GM12878 (cell line): ENCODE measurements at regions of chrX and their contacts with region 1.

Region 1: DNA sequence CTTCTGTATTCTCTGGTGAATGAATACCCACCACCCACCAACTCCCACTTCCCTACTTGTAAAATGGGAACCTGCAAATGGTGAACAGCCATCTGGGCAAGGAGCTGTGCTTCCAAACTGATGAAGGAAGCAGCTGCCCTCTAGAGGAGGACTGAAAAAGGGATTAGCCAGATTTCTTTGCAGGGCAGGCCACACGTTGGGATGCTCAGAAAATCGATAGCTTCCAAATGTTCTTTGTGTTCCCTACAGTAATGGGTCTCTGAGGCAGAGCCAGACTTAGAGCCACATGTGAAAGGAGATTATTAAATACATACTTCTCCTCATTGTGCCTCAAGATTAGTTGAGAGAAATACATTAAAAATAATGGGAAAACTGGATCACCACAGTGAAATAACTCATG is 39.3 kb upstream of the LPAR4 start:
- DNase-seq: no peak
- ATAC-seq: peak; percentile 46; the same call in 2 of the 3 replicates
- H3K4me3 ChIP-seq: no peak overlapping the region
- H3K27ac ChIP-seq: no peak overlapping the region
- H3K4me1 ChIP-seq: no peaks in the 10 kb centered on the region
- H3K27me3 ChIP-seq: no peaks in the 10 kb centered on the region
- CTCF ChIP-seq: peak; percentile 26 to 43 (median 36); a peak in 5 of 6 replicates
- EP300 ChIP-seq: no peak
- POLR2A ChIP-seq: no peak
- RAD21 ChIP-seq: peak; percentile 61

Region 2: GRCh38 chrX:78283511-78283910 is 424.8 kb before region 1 on chrX:
- CTCF ChIA-PET with region 1: no interaction called
- POLR2A ChIA-PET with region 1: no interaction called
- RAD21 ChIA-PET with region 1: no interaction called
- SMC1A ChIA-PET with region 1: no interaction called
- in situ Hi-C with region 1: no loop called
- intact Hi-C with region 1: no loop called
- DNase-seq: no peak
- ATAC-seq: no peak
- H3K4me3 ChIP-seq: no peak overlapping the region
- H3K27ac ChIP-seq: no peak overlapping the region
- H3K4me1 ChIP-seq: no peaks in the 10 kb centered on the region
- H3K27me3 ChIP-seq: no peaks in the 10 kb centered on the region
- CTCF ChIP-seq: no peak
- EP300 ChIP-seq: no peak
- POLR2A ChIP-seq: no peak
- RAD21 ChIP-seq: no peak

Region 3: GRCh38 chrX:78543281-78543680 is 165.0 kb before region 1 on chrX:
- CTCF ChIA-PET with region 1: no interaction called
- POLR2A ChIA-PET with region 1: no interaction called
- RAD21 ChIA-PET with region 1: no interaction called
- SMC1A ChIA-PET with region 1: no interaction called
- in situ Hi-C with region 1: no loop called
- intact Hi-C with region 1: no loop called
- DNase-seq: no peak
- ATAC-seq: no peak
- H3K4me3 ChIP-seq: no peak overlapping the region
- H3K27ac ChIP-seq: no peak overlapping the region
- H3K4me1 ChIP-seq: no peaks in the 10 kb centered on the region
- H3K27me3 ChIP-seq: no peaks in the 10 kb centered on the region
- CTCF ChIP-seq: no peak
- EP300 ChIP-seq: no peak
- POLR2A ChIP-seq: no peak
- RAD21 ChIP-seq: no peak

Region 4: DNA sequence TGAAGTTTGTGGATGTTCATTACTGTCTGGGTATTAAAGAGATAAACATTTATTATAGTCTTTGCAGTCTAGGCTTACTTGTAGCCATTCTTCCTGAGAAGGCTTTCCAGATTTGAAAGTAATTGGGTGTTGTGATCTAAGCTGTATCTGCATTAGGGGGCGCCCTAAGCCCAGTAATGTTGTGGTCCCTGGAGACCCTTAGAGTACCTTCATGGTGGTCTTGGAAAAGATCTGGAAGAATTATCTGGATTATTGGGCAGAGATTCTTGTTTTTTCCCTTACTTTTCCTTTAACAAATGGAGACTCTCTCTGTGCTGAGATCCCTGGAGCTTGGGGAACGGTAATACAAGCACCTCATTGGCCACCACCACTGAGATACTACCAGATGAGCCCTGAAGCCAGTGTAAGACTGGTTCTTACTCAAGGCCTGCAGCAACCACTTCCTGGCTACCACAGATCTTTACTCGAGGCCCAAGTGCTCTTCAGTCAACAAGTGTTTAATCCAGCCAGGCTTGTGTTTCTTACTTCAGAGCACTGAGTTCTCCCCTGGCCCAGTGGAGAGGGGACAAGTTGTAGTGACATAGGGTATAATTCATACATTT is 112.3 kb before region 1 on chrX:
- CTCF ChIA-PET with region 1: interaction called, 25 read pairs
- POLR2A ChIA-PET with region 1: no interaction called
- RAD21 ChIA-PET with region 1: interaction called, 19 read pairs
- SMC1A ChIA-PET with region 1: interaction called, 16 read pairs
- in situ Hi-C with region 1: no loop called
- intact Hi-C with region 1: no loop called
- DNase-seq: no peak
- ATAC-seq: peak; percentile 45; the same call in 2 of the 3 replicates
- H3K4me3 ChIP-seq: no peak overlapping the region
- H3K27ac ChIP-seq: no peak overlapping the region
- H3K4me1 ChIP-seq: no peaks in the 10 kb centered on the region
- H3K27me3 ChIP-seq: no peaks in the 10 kb centered on the region
- CTCF ChIP-seq: peak in 1 of 3 experiments; percentile 18; a peak in 1 of 6 replicates
- EP300 ChIP-seq: no peak
- POLR2A ChIP-seq: no peak
- RAD21 ChIP-seq: peak; percentile 58

Region 5: DNA sequence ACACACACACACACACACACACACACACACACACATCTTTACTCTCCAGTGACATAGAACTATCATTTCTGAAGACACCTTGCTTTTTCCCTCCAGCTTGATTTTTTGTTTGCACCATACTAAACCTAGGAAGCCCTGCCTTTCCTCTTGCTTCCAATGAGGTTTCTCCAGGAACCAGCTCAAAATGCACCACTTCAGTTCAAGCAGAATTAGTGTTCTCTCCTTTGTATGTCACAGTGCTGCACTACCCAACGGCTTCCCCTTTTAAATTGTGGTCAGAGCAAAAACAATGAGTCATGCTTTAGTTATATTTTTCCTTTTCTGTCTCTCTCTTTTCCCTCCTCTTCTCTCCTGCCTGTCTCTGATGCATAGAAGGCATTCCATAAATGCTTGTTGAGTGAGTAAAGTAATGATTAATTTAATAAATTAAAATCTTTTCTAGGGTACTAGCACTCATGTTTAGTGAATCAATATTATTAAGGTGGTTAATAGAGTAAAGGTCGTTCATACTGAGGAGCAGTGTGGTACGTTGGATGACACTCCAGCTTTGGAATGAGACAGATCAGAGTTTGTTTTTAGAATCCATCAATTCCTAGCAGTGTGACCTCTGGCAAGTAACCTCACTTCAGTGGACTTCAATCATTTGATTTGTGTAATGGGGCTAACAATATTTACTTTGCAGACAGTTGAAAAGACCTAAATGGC is 55.0 kb before region 1 on chrX:
- CTCF ChIA-PET with region 1: interaction called, 5 read pairs
- POLR2A ChIA-PET with region 1: no interaction called
- RAD21 ChIA-PET with region 1: interaction called, 10 read pairs
- SMC1A ChIA-PET with region 1: interaction called, 13 read pairs
- in situ Hi-C with region 1: no loop called
- intact Hi-C with region 1: no loop called
- DNase-seq: no peak
- ATAC-seq: peak; percentile 78
- H3K4me3 ChIP-seq: no peak overlapping the region
- H3K27ac ChIP-seq: no peak overlapping the region
- H3K4me1 ChIP-seq: peaks cover 3% of the 10 kb centered on the region; the same call in 1 of the 2 replicates
- H3K27me3 ChIP-seq: no peaks in the 10 kb centered on the region
- CTCF ChIP-seq: no peak
- EP300 ChIP-seq: no peak
- POLR2A ChIP-seq: no peak
- RAD21 ChIP-seq: no peak

Region 6: GRCh38 chrX:78658845-78659744 is 49.2 kb before region 1 on chrX and contains the start of gene RTL3:
- CTCF ChIA-PET with region 1: interaction called, 5 read pairs
- POLR2A ChIA-PET with region 1: no interaction called
- RAD21 ChIA-PET with region 1: interaction called, 10 read pairs
- SMC1A ChIA-PET with region 1: interaction called, 13 read pairs
- in situ Hi-C with region 1: no loop called
- intact Hi-C with region 1: no loop called
- DNase-seq: no peak
- ATAC-seq: peak; percentile 70
- H3K4me3 ChIP-seq: no peak within 1 kb of the TSS
- H3K27ac ChIP-seq: no peak within 1 kb of the TSS
- H3K4me1 ChIP-seq: 0 out of 2 replicates have a peak, but pooled peaks cover 3% of the 10 kb centered on the region
- H3K27me3 ChIP-seq: no peaks in the 10 kb centered on the region
- CTCF ChIP-seq: no peak
- EP300 ChIP-seq: no peak
- POLR2A ChIP-seq: no peak
- RAD21 ChIP-seq: no peak
- polyA plus RNA-seq, gene RTL3: 0.09 TPM in 1 of 2 experiments, not detected in the other

Region 7: GRCh38 chrX:78754917-78755316 is 46.7 kb after region 1 on chrX:
- CTCF ChIA-PET with region 1: interaction called, 10 read pairs
- POLR2A ChIA-PET with region 1: no interaction called
- RAD21 ChIA-PET with region 1: interaction called, 5 read pairs
- SMC1A ChIA-PET with region 1: interaction called, 7 read pairs
- in situ Hi-C with region 1: no loop called
- intact Hi-C with region 1: no loop called
- DNase-seq: peak; percentile 49
- ATAC-seq: peak; percentile 94
- H3K4me3 ChIP-seq: no peak overlapping the region
- H3K27ac ChIP-seq: no peak overlapping the region
- H3K4me1 ChIP-seq: peaks cover 20% of the 10 kb centered on the region
- H3K27me3 ChIP-seq: no peaks in the 10 kb centered on the region
- CTCF ChIP-seq: peak; percentile 15 to 44 (median 32); a peak in 4 of 6 replicates
- EP300 ChIP-seq: no peak
- POLR2A ChIP-seq: no peak
- RAD21 ChIP-seq: peak; percentile 79

Region 8: DNA sequence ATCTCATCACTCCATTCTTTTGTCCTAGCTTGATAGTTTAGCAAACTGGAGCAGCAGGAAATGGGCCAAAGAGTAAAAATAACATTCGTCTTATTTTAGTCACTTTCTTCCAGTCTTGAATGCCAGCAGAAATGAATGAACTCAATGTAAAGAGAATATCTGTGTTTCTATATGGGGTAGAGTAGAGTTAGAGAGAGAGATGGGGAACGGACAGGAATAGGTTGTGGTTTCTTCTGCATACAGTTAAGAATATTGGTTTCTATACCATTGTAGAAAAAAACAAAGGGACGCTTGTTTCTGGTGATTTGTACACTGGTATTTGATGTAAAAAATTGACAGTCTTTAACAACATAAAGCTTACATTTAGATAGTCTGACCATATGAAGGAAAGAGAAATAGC is 445.1 kb after region 1 on chrX:
- CTCF ChIA-PET with region 1: no interaction called
- POLR2A ChIA-PET with region 1: no interaction called
- RAD21 ChIA-PET with region 1: no interaction called
- SMC1A ChIA-PET with region 1: no interaction called
- in situ Hi-C with region 1: no loop called
- intact Hi-C with region 1: no loop called
- DNase-seq: no peak
- ATAC-seq: peak; percentile 48
- H3K4me3 ChIP-seq: no peak overlapping the region
- H3K27ac ChIP-seq: peak overlapping the region; percentile 8; the same call in 1 of the 2 replicates
- H3K4me1 ChIP-seq: peaks cover 2% of the 10 kb centered on the region; the same call in 1 of the 2 replicates
- H3K27me3 ChIP-seq: no peaks in the 10 kb centered on the region
- CTCF ChIP-seq: no peak
- EP300 ChIP-seq: no peak
- POLR2A ChIP-seq: no peak
- RAD21 ChIP-seq: no peak

Region 9: DNA sequence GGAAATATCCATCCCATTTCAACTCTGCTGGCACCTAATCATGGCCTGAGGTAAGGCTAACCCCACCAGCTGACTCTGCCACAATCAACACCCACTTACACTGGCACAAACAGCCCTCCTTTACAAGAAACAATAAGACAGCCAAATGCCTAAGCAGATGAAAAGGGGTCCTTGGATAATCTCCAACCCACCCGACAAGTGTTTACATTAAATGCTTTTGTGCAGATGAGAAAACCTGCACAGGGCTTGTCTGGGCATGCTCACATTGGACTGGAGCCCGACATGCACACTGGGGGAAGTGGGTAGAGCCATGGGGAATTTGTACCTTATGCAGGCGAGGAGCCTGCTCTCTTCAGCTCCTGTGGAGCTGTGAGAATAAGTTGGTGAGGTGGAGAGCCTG is 797.7 kb after region 1 on chrX:
- CTCF ChIA-PET with region 1: no interaction called
- POLR2A ChIA-PET with region 1: no interaction called
- RAD21 ChIA-PET with region 1: no interaction called
- SMC1A ChIA-PET with region 1: no interaction called
- in situ Hi-C with region 1: no loop called
- intact Hi-C with region 1: no loop called
- DNase-seq: no peak
- ATAC-seq: no peak
- H3K4me3 ChIP-seq: no peak overlapping the region
- H3K27ac ChIP-seq: no peak overlapping the region
- H3K4me1 ChIP-seq: no peaks in the 10 kb centered on the region
- H3K27me3 ChIP-seq: no peaks in the 10 kb centered on the region
- CTCF ChIP-seq: no peak
- EP300 ChIP-seq: no peak
- POLR2A ChIP-seq: no peak
- RAD21 ChIP-seq: no peak